ENCODE measurements at regions of chr14 and their contacts with region 1.

Region 1: GRCh38 chr14:56659964-56660551 is 80.5 kb downstream of the TMEM260 start:
- DNase-seq: no peak
- H3K4me3 Mint-ChIP-seq: no peak overlapping the region
- H3K27ac Mint-ChIP-seq: no peak overlapping the region
- H3K4me1 Mint-ChIP-seq: no peaks in the 10 kb centered on the region
- H3K27me3 Mint-ChIP-seq: no peaks in the 10 kb centered on the region

Region 2: DNA sequence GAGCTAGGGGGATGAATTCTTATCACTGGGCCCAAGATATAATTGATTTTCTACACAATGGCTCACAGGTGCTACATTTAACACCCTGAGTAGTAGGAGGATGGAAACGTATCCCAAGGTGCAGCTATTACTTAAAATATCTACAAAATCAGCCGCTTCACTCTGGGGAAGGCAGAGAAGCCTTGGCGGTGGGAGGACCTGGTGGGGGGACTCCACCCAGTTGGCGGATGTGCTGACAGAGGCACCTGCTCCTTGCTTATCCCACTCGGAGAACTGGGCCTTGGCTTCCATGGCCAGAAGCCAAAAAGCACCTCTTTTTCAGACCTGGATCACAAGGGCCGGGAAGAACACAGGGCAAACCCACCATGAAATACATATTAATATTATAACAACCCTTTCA is 43.9 kb after region 1 on chr14:
- CTCF ChIA-PET with region 1: no interaction called
- intact Hi-C with region 1: no loop called
- DNase-seq: no peak
- H3K4me3 Mint-ChIP-seq: no peak overlapping the region
- H3K27ac Mint-ChIP-seq: no peak overlapping the region
- H3K4me1 Mint-ChIP-seq: no peaks in the 10 kb centered on the region
- H3K27me3 Mint-ChIP-seq: peaks cover 27% of the 10 kb centered on the region

Region 3: GRCh38 chr14:57182760-57183503 is 522.9 kb after region 1 on chr14:
- CTCF ChIA-PET with region 1: no interaction called
- intact Hi-C with region 1: loop called (anchors 5 kb)
- DNase-seq: no peak
- H3K4me3 Mint-ChIP-seq: no peak overlapping the region
- H3K27ac Mint-ChIP-seq: no peak overlapping the region
- H3K4me1 Mint-ChIP-seq: no peaks in the 10 kb centered on the region
- H3K27me3 Mint-ChIP-seq: peaks cover 6% of the 10 kb centered on the region

Region 4: GRCh38 chr14:57293866-57294837 is 634.1 kb after region 1 on chr14:
- CTCF ChIA-PET with region 1: no interaction called
- intact Hi-C with region 1: loop called (anchors 2 kb)
- DNase-seq: no peak
- H3K4me3 Mint-ChIP-seq: no peak overlapping the region
- H3K27ac Mint-ChIP-seq: no peak overlapping the region
- H3K4me1 Mint-ChIP-seq: no peaks in the 10 kb centered on the region
- H3K27me3 Mint-ChIP-seq: no peaks in the 10 kb centered on the region

Measured in activated naive CD4-positive, alpha-beta T cell treated with anti-CD3 and anti-CD28 coated beads for 36 hours (primary cell).